Left ventricle myocardium superior (tissue), 1 donor: ENCODE measurements at regions of chr7 and their contacts with region 1.

Region 1: DNA sequence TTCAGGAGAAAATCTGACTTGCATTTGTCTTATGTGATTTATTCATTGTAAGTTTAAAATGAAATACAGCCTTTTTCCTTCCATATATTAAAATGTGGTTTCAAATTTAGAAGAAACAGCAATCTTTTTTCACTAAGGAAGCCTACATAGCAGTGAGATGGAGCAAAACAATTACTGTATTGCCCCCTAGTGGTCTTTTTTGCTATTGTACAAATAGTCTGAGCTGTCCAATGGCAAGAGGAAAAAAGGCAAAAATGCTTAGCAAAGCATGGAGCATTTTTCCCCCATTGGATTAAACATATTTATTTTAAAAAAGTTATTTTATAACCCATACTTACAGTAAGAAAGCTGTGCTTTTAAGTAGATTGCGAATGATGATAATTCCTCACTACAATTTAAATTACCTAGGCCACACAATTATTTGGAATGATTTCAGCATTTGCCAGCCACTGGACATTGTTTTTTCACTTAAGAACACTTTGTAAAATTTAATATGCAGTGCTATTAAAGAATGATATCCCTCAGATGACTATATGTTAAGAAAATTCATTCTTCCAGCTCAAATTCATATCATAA is 119.5 kb downstream of the CPED1 start:
- DNase-seq: no peak
- ATAC-seq: peak; percentile 76

Region 2: DNA sequence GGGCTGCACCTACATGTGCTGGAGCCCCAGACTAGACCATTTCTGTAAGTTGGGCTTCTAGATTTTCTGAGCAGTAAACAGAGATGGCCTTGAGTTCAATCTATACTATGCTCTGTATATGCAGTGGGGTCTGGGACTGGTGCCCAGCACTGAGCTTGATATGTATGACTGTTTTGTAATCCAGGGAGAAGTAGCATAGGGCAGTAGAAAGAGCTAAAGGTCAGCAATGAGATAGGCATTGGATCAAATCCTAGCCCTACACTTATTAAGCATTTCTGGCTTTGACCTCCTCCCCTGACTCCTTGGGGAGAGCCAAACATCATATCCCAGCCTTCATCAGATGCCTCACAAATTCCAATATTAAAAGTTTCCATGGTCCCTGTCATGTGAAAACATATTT is 504.6 kb before region 1 on chr7:
- intact Hi-C with region 1: no loop called
- DNase-seq: no peak
- ATAC-seq: no peak

Region 3: DNA sequence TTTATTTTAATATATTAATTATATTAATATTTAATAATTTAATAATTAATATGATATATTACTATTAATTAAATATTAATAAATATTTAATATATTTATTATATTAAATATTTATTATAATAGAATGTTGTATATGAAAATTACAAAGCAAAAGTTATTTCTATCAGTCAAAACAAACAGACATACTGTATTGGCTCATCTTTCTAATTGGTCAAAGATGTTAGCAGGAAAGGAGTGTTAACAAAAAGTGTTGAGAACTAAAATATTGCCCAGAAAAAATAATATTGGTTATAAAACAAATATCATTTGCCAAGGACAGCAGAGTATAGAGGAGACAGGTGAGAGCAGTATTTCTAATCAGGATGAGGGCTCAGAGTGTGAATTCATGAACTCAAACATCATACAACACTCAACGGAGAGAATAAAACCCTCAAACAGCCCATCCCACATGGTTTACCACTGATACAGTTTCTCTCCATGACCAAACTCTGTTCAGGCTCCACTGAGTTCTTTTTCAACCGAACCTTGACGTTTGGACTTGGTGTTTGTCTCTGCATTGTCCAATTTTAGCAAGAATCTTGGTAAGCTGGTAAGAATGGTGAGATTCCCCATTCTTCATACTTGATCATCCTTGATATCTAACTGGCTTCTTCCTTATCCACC is 308.1 kb before region 1 on chr7:
- intact Hi-C with region 1: loop called (anchors 5 kb)
- DNase-seq: no peak
- ATAC-seq: no peak

Region 4: GRCh38 chr7:120987683-120988590 is 120.1 kb before region 1 on chr7:
- intact Hi-C with region 1: loop called (anchors 5 kb)
- DNase-seq: peak; percentile 95
- ATAC-seq: peak; percentile 86